HepG2 (cell line): ENCODE measurements at regions of chr15 and their contacts with region 1.

Region 1: GRCh38 chr15:86624261-86625036 is 544.8 kb downstream of the AGBL1 start:
- DNase-seq: peak; percentile 73
- ATAC-seq: peak; percentile 100
- H3K4me3 ChIP-seq: no peak overlapping the region
- H3K27ac ChIP-seq: no peak overlapping the region
- H3K4me1 ChIP-seq: 0 out of 2 replicates have a peak, but pooled peaks cover 5% of the 10 kb centered on the region
- H3K27me3 ChIP-seq: no peaks in the 10 kb centered on the region
- CTCF ChIP-seq: peak; percentile 78
- EP300 ChIP-seq: no peak
- POLR2A ChIP-seq: no peak
- RAD21 ChIP-seq: peak; percentile 66

Region 2: DNA sequence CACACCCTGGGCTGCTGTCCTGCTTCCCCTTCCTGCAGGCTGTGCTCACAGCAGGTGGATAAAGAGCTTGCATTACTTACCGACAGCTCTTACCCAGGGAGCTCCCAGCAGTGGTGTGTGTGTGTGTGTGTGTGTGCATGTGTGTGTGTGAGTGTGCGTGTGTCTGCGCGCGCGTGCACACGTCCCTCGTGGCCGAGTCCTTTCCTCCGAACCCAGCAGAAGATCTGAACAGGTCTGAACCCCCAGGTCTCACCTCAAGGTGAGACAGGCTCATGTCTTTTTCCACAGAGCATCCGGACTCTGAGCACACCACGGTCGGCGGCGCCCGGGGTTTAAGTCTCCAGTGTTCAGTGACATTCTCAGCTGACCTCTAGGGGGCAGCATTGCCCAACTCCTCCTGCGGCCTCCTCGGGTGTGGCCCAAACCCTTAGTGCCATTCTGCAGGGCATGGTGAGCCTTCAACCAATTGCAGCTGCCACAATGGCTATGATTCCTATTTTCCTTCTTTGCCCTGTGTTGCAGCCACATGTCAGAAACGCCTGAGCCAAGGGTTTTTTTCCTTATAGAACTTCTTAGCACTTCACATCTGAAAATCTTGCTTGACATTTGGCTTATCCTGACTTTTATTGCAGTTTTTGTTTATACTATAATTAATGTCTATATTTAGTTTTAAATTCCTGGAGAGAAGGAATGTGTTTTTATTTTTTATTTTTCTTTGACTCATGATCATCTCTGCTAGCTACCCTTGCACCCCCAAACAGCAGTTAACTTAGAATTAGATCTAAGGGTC is 765.7 kb before region 1 on chr15:
- CTCF ChIA-PET with region 1: no interaction called
- POLR2A ChIA-PET with region 1: no interaction called
- in situ Hi-C with region 1: loop called (anchors 25 kb)
- intact Hi-C with region 1: loop called (anchors 5 kb)
- DNase-seq: peak; percentile 34
- ATAC-seq: peak; percentile 96
- H3K4me3 ChIP-seq: no peak overlapping the region; a peak in 1 of 6 replicates
- H3K27ac ChIP-seq: no peak overlapping the region
- H3K4me1 ChIP-seq: no peaks in the 10 kb centered on the region
- H3K27me3 ChIP-seq: peaks cover 0 to 1% of the 10 kb centered on the region in 2 experiments; a peak in 1 of 5 replicates
- CTCF ChIP-seq: peak; percentile 87
- EP300 ChIP-seq: no peak
- POLR2A ChIP-seq: no peak
- RAD21 ChIP-seq: peak; percentile 43; the same call in 1 of the 2 replicates

Region 3: DNA sequence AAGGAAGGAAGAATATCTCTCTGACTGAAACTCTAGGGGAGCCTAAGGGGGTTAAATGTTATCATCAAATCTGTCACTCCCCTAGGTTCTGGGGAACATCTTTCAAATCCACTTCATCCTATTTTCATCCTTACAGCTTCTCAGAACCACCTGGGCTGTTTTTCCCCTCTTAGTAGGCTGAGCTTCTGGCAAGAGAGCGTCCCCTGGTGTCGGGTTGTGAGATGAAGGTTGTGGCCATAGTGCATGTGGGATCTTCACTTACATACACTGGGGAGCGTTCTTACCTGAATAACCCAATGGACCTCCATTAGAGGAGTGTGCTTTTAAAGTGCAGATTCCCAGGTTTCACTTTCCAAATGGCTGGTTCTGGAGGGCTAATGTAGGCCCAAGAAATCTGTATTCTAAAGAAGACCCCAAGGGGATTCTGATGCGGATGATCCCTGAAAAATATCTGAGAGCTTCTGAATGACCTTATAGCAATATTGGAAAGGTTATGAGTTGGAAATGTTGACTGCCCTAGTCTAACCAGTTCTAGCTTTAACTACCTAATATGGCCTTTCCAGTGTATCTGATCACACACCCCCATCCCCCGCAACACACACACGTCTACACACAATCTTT is 118.9 kb after region 1 on chr15:
- CTCF ChIA-PET with region 1: interaction called, 5 read pairs
- POLR2A ChIA-PET with region 1: no interaction called
- in situ Hi-C with region 1: no loop called
- intact Hi-C with region 1: loop called (anchors 1 kb)
- DNase-seq: peak; percentile 1
- ATAC-seq: no peak
- H3K4me3 ChIP-seq: no peak overlapping the region
- H3K27ac ChIP-seq: no peak overlapping the region
- H3K4me1 ChIP-seq: no peaks in the 10 kb centered on the region
- H3K27me3 ChIP-seq: no peaks in the 10 kb centered on the region
- CTCF ChIP-seq: peak; percentile 36; the same call in 1 of the 2 replicates
- EP300 ChIP-seq: no peak
- POLR2A ChIP-seq: no peak
- RAD21 ChIP-seq: no peak

Region 4: GRCh38 chr15:87604857-87605446 is 980.5 kb after region 1 on chr15:
- CTCF ChIA-PET with region 1: no interaction called
- POLR2A ChIA-PET with region 1: no interaction called
- in situ Hi-C with region 1: no loop called
- intact Hi-C with region 1: loop called (anchors 5 kb)
- DNase-seq: no peak
- ATAC-seq: no peak
- H3K4me3 ChIP-seq: no peak overlapping the region
- H3K27ac ChIP-seq: no peak overlapping the region
- H3K4me1 ChIP-seq: no peaks in the 10 kb centered on the region
- H3K27me3 ChIP-seq: no peaks in the 10 kb centered on the region
- CTCF ChIP-seq: peak; percentile 22; the same call in 1 of the 2 replicates
- EP300 ChIP-seq: no peak
- POLR2A ChIP-seq: no peak
- RAD21 ChIP-seq: no peak

Region 5: GRCh38 chr15:88246666-88247446 is 1622.4 kb after region 1 on chr15:
- CTCF ChIA-PET with region 1: interaction called, 3 read pairs
- POLR2A ChIA-PET with region 1: no interaction called
- in situ Hi-C with region 1: loop called (anchors 10 kb)
- intact Hi-C with region 1: no loop called
- DNase-seq: peak; percentile 44
- ATAC-seq: peak; percentile 93
- H3K4me3 ChIP-seq: no peak overlapping the region
- H3K27ac ChIP-seq: no peak overlapping the region
- H3K4me1 ChIP-seq: no peaks in the 10 kb centered on the region
- H3K27me3 ChIP-seq: peaks cover 3 to 4% of the 10 kb centered on the region in 2 experiments; a peak in 2 of 5 replicates
- CTCF ChIP-seq: peak; percentile 92
- EP300 ChIP-seq: no peak
- POLR2A ChIP-seq: no peak
- RAD21 ChIP-seq: peak; percentile 66